ENCODE measurements at regions of chr3 and their contacts with region 1.

Region 1: GRCh38 chr3:128617557-128618397 is 32.8 kb downstream of the RPN1 start:
- DNase-seq: peak; percentile 99
- H3K4me3 Mint-ChIP-seq: peak overlapping the region; percentile 86
- H3K27ac Mint-ChIP-seq: peak overlapping the region; percentile 84
- H3K4me1 Mint-ChIP-seq: peaks cover 31% of the 10 kb centered on the region
- H3K27me3 Mint-ChIP-seq: no peaks in the 10 kb centered on the region

Region 2: GRCh38 chr3:128794770-128795649 is 177.2 kb after region 1 on chr3:
- intact Hi-C with region 1: loop called (anchors 2 kb)
- DNase-seq: peak; percentile 61
- H3K4me3 Mint-ChIP-seq: peak overlapping the region; percentile 49
- H3K27ac Mint-ChIP-seq: peak overlapping the region; percentile 93
- H3K4me1 Mint-ChIP-seq: peaks cover 63% of the 10 kb centered on the region
- H3K27me3 Mint-ChIP-seq: no peaks in the 10 kb centered on the region

Measured in activated T-helper 2 cell treated with anti-CD3 and anti-CD28 coated beads, Interferon-gamma antibody, Interleukin-2, Interleukin-4, amounts not matched to agents 10 μg/mL and 5 μg/mL and 100 μg/mL, durations not matched to agents 14 hours and 24 hours and 36 hours (primary cell).